A673 (cell line): ENCODE measurements at regions of chr2 and their contacts with region 1.

Region 1: DNA sequence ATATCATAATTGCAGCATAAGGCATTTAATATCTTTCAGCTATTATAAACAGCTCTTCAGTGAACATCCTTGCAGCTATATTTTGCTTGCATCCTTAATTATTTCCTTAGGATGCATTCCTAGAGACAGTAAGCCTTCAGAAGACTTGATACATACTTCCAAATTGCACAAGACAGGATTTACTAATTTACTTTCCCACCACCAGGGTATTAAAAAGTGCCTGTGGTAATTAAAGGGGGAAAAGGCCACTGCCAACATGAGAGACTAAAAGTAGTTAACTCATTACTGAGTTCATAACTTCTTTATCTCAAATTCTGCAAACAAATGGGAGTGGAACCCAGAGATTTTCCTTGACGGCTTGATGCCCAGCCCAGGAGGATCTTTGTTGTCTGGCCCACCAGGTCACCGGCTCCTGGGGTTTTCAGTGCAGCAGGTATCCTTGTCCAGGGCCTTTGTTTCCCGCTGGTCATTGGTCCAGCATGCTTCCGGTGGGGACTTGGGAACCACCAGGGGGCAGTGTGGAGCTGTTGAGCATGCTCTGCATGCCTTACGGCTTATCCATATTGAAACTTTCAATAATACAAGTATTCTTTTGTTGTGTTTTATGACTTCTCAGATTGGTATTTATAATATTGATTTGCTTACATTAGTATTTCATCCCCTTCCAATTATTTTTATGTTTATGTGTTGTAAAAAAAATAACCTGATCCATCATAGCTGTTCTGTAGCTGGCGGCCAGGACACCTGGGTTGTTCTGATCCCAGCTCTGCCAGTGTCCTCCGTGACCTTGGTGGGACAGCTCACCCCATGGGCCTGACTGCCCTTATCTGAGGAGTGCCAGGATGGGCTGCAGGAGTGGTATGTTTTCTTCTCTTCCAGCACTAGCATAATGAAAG is 61.4 kb downstream of the TGOLN2 start:
- DNase-seq: peak; percentile 58
- H3K4me3 ChIP-seq: no peak overlapping the region
- H3K27ac ChIP-seq: no peak overlapping the region
- H3K4me1 ChIP-seq: peaks cover 33% of the 10 kb centered on the region
- H3K27me3 ChIP-seq: no peaks in the 10 kb centered on the region
- CTCF ChIP-seq: peak; percentile 98

Region 2: GRCh38 chr2:85017411-85018048 is 248.9 kb before region 1 on chr2:
- CTCF ChIA-PET with region 1: interaction called, 13 read pairs
- POLR2A ChIA-PET with region 1: no interaction called
- intact Hi-C with region 1: no loop called
- DNase-seq: peak; percentile 75
- H3K4me3 ChIP-seq: no peak overlapping the region
- H3K27ac ChIP-seq: peak overlapping the region; percentile 0
- H3K4me1 ChIP-seq: peaks cover 55% of the 10 kb centered on the region
- H3K27me3 ChIP-seq: no peaks in the 10 kb centered on the region
- CTCF ChIP-seq: peak; percentile 75

Region 3: GRCh38 chr2:85340034-85340892 is 73.9 kb after region 1 on chr2:
- CTCF ChIA-PET with region 1: interaction called, 14 read pairs
- POLR2A ChIA-PET with region 1: no interaction called
- intact Hi-C with region 1: no loop called
- DNase-seq: no peak
- H3K4me3 ChIP-seq: no peak overlapping the region
- H3K27ac ChIP-seq: no peak overlapping the region
- H3K4me1 ChIP-seq: no peaks in the 10 kb centered on the region
- H3K27me3 ChIP-seq: no peaks in the 10 kb centered on the region
- CTCF ChIP-seq: no peak